ENCODE measurements at regions of chr18 and their contacts with region 1.

Region 1: GRCh38 chr18:65968239-65969004 is 217.6 kb downstream of the CDH7 start:
- DNase-seq: no peak
- ATAC-seq: peak; percentile 41; the same call in 1 of the 3 replicates
- H3K4me3 ChIP-seq: no peak overlapping the region
- H3K27ac ChIP-seq: no peak overlapping the region
- H3K4me1 ChIP-seq: no peaks in the 10 kb centered on the region
- H3K27me3 ChIP-seq: no peaks in the 10 kb centered on the region
- CTCF ChIP-seq: no peak
- EP300 ChIP-seq: no peak
- POLR2A ChIP-seq: no peak
- RAD21 ChIP-seq: no peak

Region 2: DNA sequence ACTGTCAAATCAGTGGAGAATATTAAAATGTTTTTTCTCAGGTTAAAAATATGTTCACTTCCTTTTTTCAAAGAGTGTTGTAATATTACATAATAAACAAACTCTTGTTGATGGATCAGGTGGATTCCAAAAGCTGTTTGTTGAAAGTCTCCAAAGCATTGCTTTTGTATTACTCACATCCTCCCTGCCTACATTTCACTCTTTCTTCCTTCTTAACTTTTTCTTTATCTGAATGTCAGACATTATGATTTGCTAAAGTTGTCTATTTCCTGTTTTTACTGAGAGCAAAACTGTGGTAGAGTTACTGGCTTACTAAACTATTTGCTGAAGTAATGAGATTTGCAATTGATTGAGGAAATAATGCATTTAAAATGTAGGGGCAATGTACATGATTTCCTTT is 543.4 kb after region 1 on chr18:
- CTCF ChIA-PET with region 1: no interaction called
- POLR2A ChIA-PET with region 1: no interaction called
- in situ Hi-C with region 1: loop called (anchors 25 kb)
- intact Hi-C with region 1: no loop called
- DNase-seq: no peak
- ATAC-seq: no peak
- H3K4me3 ChIP-seq: no peak overlapping the region
- H3K27ac ChIP-seq: no peak overlapping the region
- H3K4me1 ChIP-seq: no peaks in the 10 kb centered on the region
- H3K27me3 ChIP-seq: no peaks in the 10 kb centered on the region
- CTCF ChIP-seq: no peak
- EP300 ChIP-seq: no peak
- POLR2A ChIP-seq: no peak
- RAD21 ChIP-seq: no peak